Naive thymus-derived CD4-positive, alpha-beta T cell (primary cell): ENCODE measurements at regions of chr19 and their contacts with region 1.

Region 1: GRCh38 chr19:48152551-48152950 is 17.6 kb downstream of the LIG1 start:
- DNase-seq: peak; percentile 28 to 67 (median 50)
- ATAC-seq: peak; percentile 75
- H3K4me3 ChIP-seq: no peak overlapping the region
- H3K4me3 Mint-ChIP-seq: no peak overlapping the region
- H3K27ac ChIP-seq: no peak overlapping the region
- H3K27ac Mint-ChIP-seq: peak overlapping the region in 1 of 9 donors; percentile 74
- H3K4me1 ChIP-seq: no peaks in the 10 kb centered on the region
- H3K4me1 Mint-ChIP-seq: peaks cover 0 to 13% (median 2%) of the 10 kb centered on the region in 7 donors
- H3K27me3 ChIP-seq: no peaks in the 10 kb centered on the region
- H3K27me3 Mint-ChIP-seq: no peaks in the 10 kb centered on the region

Region 2: GRCh38 chr19:48110350-48110966 is 42.1 kb before region 1 on chr19 and contains the start of gene PLA2G4C:
- CTCF ChIA-PET with region 1: interaction called, 5 read pairs
- POLR2A ChIA-PET with region 1: no interaction called
- intact Hi-C with region 1: loop called (anchors 1 kb)
- DNase-seq: peak; percentile 69 to 88 (median 79)
- ATAC-seq: peak; percentile 83
- H3K4me3 ChIP-seq: peak within 1 kb of the TSS; percentile 62
- H3K4me3 Mint-ChIP-seq: peak within 1 kb of the TSS; percentile 66 to 86 (median 79)
- H3K27ac ChIP-seq: peak within 1 kb of the TSS; percentile 30
- H3K27ac Mint-ChIP-seq: peak within 1 kb of the TSS; percentile 37 to 92 (median 71)
- H3K4me1 ChIP-seq: no peaks in the 10 kb centered on the region
- H3K4me1 Mint-ChIP-seq: peaks cover 5 to 19% (median 9%) of the 10 kb centered on the region in 7 donors
- H3K27me3 ChIP-seq: no peaks in the 10 kb centered on the region
- H3K27me3 Mint-ChIP-seq: no peaks in the 10 kb centered on the region
- total RNA-seq, gene PLA2G4C: 3.3 to 21.2 (median 9.1) TPM